ENCODE measurements at regions of chr15 and their contacts with region 1.

Region 1: DNA sequence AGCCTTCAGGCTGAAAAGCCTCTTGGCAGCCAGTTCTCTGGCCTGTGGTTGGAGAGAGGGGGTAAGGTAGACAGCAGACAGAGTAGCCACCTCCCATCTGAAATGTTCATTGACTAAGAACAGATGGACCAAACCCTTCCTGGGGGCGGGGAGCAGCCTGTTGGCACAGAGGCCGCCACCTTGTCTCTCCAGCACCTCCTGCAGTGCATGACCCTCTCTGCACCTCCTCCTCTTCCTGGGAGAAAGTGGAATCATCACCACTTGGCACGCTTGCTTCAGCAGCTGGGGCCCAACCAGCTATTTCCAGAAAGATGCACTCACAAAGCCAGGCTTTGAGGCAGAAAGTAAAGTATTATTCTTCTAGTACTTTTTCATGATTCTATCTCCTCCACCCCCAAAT is 313.4 kb upstream of the CHRM5 start:
- DNase-seq: no peak
- H3K4me3 ChIP-seq: no peak overlapping the region
- H3K27ac ChIP-seq: no peak overlapping the region
- H3K4me1 ChIP-seq: no peaks in the 10 kb centered on the region
- CTCF ChIP-seq: 0 out of 2 replicates have a peak, but pooled peaks have one; percentile 27

Region 2: DNA sequence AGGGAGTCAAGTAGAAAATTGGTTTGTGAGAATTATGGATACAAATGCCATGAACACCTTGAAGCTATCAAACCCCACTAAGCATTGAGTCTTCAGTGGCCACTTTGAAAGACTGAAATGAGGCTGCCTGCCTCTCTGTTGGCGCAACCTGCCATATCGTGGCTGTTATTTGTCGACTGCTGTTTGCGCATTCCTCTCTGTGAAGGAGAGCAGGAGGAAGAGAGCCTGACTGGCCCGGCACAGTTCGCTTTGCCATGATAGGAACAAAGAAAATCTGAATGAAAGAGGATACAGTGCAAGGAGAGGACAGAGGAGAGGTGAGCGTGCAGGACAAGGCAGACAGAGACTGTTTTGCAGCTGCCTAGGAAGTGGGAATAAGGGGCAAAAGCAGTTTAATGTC is 54.6 kb before region 1 on chr15:
- CTCF ChIA-PET with region 1: no interaction called
- POLR2A ChIA-PET with region 1: no interaction called
- intact Hi-C with region 1: loop called (anchors 5 kb)
- DNase-seq: no peak
- H3K4me3 ChIP-seq: no peak overlapping the region
- H3K27ac ChIP-seq: no peak overlapping the region
- H3K4me1 ChIP-seq: no peaks in the 10 kb centered on the region
- CTCF ChIP-seq: no peak

Region 3: GRCh38 chr15:33746203-33746602 is 91.3 kb after region 1 on chr15:
- CTCF ChIA-PET with region 1: no interaction called
- POLR2A ChIA-PET with region 1: no interaction called
- intact Hi-C with region 1: no loop called
- DNase-seq: no peak
- H3K4me3 ChIP-seq: no peak overlapping the region
- H3K27ac ChIP-seq: no peak overlapping the region
- H3K4me1 ChIP-seq: no peaks in the 10 kb centered on the region
- CTCF ChIP-seq: no peak